ENCODE measurements at regions of chr16 and their contacts with region 1.

Region 1: GRCh38 chr16:58025351-58026138 is at the start of gene MMP15:
- DNase-seq: peak; percentile 47
- ATAC-seq: peak; percentile 69
- H3K4me3 Mint-ChIP-seq: peak within 1 kb of the TSS; percentile 84
- H3K27ac Mint-ChIP-seq: peak within 1 kb of the TSS; percentile 36
- H3K4me1 Mint-ChIP-seq: peaks cover 11% of the 10 kb centered on the region
- H3K27me3 Mint-ChIP-seq: peaks cover 23% of the 10 kb centered on the region
- CTCF ChIP-seq: no peak
- total RNA-seq, gene MMP15: 0.60 TPM in 1 of 2 replicates, not detected in the other

Region 2: GRCh38 chr16:57916735-57917451 is 108.7 kb before region 1 on chr16:
- CTCF ChIA-PET with region 1: no interaction called
- POLR2A ChIA-PET with region 1: no interaction called
- intact Hi-C with region 1: no loop called
- DNase-seq: no peak
- ATAC-seq: no peak
- H3K4me3 Mint-ChIP-seq: no peak overlapping the region
- H3K27ac Mint-ChIP-seq: no peak overlapping the region
- H3K4me1 Mint-ChIP-seq: no peaks in the 10 kb centered on the region
- H3K27me3 Mint-ChIP-seq: peaks cover 14% of the 10 kb centered on the region
- CTCF ChIP-seq: no peak

Region 3: GRCh38 chr16:58198022-58198683 is 172.6 kb after region 1 on chr16 and contains the start of gene CSNK2A2:
- CTCF ChIA-PET with region 1: no interaction called
- POLR2A ChIA-PET with region 1: no interaction called
- intact Hi-C with region 1: loop called (anchors 10 kb)
- DNase-seq: peak; percentile 73
- ATAC-seq: peak; percentile 94
- H3K4me3 Mint-ChIP-seq: peak within 1 kb of the TSS; percentile 87
- H3K27ac Mint-ChIP-seq: peak within 1 kb of the TSS; percentile 65
- H3K4me1 Mint-ChIP-seq: peaks cover 33% of the 10 kb centered on the region
- H3K27me3 Mint-ChIP-seq: no peaks in the 10 kb centered on the region
- CTCF ChIP-seq: no peak
- total RNA-seq, gene CSNK2A2: 77.3 and 85.5 TPM in 2 replicates